H1 (cell line): ENCODE measurements at regions of chr5 and their contacts with region 1.

Region 1: DNA sequence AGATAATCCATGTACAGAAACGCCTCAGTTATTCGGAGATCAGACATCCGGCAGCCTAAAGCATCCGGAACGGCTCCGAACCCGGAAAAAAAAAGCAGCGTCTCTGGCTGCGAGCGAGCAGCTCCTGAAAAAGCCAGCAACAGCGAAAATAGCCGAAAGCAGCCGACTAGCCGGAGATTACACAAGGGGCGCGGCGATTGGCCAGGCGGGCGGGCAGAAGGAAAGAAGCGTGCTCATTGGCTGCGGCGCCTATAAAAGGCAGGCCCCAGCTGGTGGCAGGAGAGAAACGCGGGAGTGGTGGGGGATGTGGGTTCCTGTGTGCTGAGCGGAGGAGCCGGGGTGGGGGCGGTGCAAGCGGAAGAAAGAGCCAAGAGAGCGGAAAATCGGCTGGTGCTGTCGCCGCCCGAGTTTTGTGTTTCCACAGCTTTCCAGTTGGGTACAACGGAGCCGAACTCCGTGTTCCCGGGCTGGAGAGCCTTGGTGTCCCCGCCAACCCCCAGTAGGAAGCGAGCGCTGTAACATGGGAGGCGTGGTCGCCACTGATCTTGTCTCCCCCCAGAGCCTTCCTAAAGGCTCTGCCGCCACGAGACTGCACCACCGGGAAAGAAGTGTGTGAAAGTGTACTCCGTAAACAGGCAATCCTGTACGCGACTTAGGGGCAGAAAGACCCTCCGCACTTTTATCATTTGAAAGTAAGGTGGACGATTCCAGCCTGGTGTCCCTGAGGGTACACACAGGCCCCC is at the start of gene ARL15:
- DNase-seq: peak; percentile 89 to 99
- H3K4me3 ChIP-seq: peak within 1 kb of the TSS; percentile 81 to 86 (median 84)
- H3K27ac ChIP-seq: peak within 1 kb of the TSS; percentile 60
- H3K4me1 ChIP-seq: peaks cover 0 to 6% (median 3%) of the 10 kb centered on the region in 4 experiments; a peak in 4 of 7 replicates
- H3K27me3 ChIP-seq: peaks cover 0 to 2% (median 0%) of the 10 kb centered on the region in 4 experiments; a peak in 1 of 7 replicates
- CTCF ChIP-seq: no peak
- EP300 ChIP-seq: no peak
- POLR2A ChIP-seq: peak; percentile 100
- RAD21 ChIP-seq: no peak
- total RNA-seq, gene ARL15: 21.2 and 22.5 TPM in 2 replicates

Region 2: DNA sequence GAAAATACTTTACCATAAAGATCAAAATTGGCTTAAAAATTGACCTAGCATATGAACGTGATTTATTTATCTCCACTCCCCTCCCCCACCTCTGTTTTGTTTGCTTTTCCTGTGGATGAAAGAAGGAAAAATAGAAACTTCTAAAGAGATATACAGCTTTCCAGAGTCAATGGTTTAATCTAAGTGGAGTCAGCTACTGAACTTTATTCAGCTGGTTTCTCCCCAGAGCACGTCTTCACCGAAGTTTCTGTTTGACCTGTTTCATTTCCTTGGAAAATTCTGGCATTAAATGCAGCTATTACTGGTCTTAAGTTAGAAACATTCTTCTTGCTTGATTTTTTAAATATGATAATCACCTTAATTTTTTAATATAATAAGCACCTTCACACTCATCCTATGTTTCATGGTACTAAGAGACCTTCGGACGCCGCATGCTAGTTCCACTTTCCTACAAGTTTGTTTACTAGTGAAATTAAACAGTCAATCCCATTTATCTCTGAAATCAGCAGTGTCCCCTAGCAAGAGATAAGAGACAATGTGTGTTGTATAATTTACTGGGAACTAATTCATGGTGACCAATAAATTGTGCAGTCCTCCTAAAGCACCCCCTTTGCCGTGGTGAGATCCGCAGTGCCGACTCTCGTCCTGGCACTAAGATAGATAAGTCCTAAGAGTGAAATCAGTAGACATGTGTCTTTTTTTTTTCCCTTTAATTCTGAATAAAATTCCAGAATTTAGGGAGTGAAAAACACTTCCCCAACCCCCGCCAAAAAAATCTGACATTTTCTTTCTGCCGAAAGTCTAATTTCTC is 90.2 kb before region 1 on chr5:
- CTCF ChIA-PET with region 1: no interaction called
- POLR2A ChIA-PET with region 1: no interaction called
- DNase-seq: no peak
- H3K4me3 ChIP-seq: no peak overlapping the region
- H3K27ac ChIP-seq: no peak overlapping the region
- H3K4me1 ChIP-seq: peaks cover 0 to 10% (median 3%) of the 10 kb centered on the region in 4 experiments; a peak in 2 of 7 replicates
- H3K27me3 ChIP-seq: no peaks in the 10 kb centered on the region
- CTCF ChIP-seq: no peak
- EP300 ChIP-seq: no peak
- POLR2A ChIP-seq: no peak
- RAD21 ChIP-seq: no peak

Region 3: DNA sequence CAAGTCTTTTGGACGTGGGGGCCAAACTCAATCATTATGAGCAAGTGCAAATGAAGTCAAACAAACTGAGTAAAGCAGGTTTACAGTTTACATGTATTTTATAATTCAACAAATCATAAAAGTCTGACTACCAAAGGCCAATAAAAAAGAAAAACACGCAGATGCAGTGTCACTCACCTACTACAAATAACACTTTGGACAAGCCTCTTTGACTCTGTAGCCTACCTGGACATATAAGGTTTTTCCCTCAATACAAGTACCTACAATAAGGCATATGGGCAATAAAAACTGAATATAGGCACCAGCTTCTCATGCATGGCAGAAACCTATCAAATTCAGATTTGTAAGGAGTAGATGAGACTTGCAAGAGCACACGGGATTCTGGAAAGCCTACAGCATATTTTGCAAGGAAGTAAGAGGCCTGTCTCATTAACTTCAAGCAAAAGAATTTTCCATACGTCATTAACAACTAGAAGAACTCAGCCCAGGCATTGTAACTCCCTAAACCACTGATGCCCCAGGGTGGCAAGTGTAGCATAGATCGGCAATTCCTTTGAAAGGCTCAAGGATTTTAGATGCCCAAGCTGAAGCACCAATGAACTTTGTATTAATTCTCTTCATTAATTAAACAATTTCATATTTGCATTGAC is 21.9 kb before region 1 on chr5:
- CTCF ChIA-PET with region 1: interaction called, 3 read pairs
- POLR2A ChIA-PET with region 1: interaction called, 14 read pairs
- DNase-seq: no peak
- H3K4me3 ChIP-seq: no peak overlapping the region
- H3K27ac ChIP-seq: no peak overlapping the region
- H3K4me1 ChIP-seq: peaks cover 0 to 8% (median 3%) of the 10 kb centered on the region in 4 experiments; a peak in 5 of 7 replicates
- H3K27me3 ChIP-seq: no peaks in the 10 kb centered on the region
- CTCF ChIP-seq: no peak
- EP300 ChIP-seq: no peak
- POLR2A ChIP-seq: no peak
- RAD21 ChIP-seq: no peak

Region 4: GRCh38 chr5:54295651-54296276 is 14.8 kb before region 1 on chr5:
- CTCF ChIA-PET with region 1: interaction called, 5 read pairs
- POLR2A ChIA-PET with region 1: interaction called, 27 read pairs
- DNase-seq: no peak
- H3K4me3 ChIP-seq: no peak overlapping the region
- H3K27ac ChIP-seq: no peak overlapping the region
- H3K4me1 ChIP-seq: peaks cover 0 to 9% (median 8%) of the 10 kb centered on the region in 4 experiments; a peak in 4 of 7 replicates
- H3K27me3 ChIP-seq: no peaks in the 10 kb centered on the region
- CTCF ChIP-seq: no peak
- EP300 ChIP-seq: no peak
- POLR2A ChIP-seq: no peak
- RAD21 ChIP-seq: no peak

Region 5: GRCh38 chr5:54325610-54326311 is 15.2 kb after region 1 on chr5:
- CTCF ChIA-PET with region 1: interaction called, 9 read pairs
- POLR2A ChIA-PET with region 1: interaction called, 26 read pairs
- DNase-seq: no peak
- H3K4me3 ChIP-seq: no peak overlapping the region
- H3K27ac ChIP-seq: no peak overlapping the region
- H3K4me1 ChIP-seq: peaks cover 0 to 3% (median 0%) of the 10 kb centered on the region in 4 experiments; a peak in 3 of 7 replicates
- H3K27me3 ChIP-seq: no peaks in the 10 kb centered on the region
- CTCF ChIP-seq: no peak
- EP300 ChIP-seq: no peak
- POLR2A ChIP-seq: no peak
- RAD21 ChIP-seq: no peak

Region 6: DNA sequence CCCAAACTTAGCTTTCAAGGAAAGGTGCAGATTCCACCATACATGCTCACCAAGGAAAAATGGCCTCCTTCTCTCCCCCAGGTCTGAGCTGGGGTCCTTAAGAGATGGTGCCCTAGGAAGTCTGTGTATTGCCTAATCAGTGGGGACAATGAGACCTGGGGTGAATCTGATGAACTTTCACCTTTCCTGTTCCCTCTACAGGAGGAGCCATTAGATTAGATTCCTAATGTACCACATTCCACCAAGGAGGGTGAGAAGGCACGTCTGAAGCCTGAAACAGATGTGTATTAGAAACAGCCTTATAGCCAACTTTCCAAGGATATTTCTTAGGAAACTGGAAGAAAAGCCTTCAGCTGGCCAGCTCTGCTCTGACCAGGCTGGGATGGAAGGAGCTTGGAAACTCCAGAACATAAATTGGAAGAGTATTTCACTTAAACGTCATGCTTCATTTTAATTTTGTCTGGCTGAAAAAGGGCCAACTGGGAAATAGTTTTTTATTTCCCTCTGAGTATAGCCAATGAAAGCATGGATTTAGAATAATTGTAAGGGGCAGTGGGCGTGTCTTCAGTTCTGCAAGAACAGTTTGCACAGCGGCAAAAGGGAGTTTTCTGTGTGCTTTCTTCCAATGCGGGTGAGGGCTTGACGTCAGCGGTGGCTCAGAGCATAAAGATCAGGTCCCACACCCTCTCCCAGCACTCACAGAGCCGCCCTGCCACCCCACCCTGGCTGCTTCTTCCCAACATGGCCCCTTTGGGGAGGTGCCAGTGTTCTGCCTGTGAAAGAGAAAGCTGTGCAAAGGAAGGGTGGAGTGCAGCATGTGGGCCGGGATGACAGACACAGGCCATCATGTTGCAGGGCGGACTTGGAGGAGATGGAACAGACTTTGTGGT is 463.9 kb after region 1 on chr5:
- CTCF ChIA-PET with region 1: no interaction called
- POLR2A ChIA-PET with region 1: no interaction called
- DNase-seq: no peak
- H3K4me3 ChIP-seq: no peak overlapping the region
- H3K27ac ChIP-seq: no peak overlapping the region
- H3K4me1 ChIP-seq: no peaks in the 10 kb centered on the region
- H3K27me3 ChIP-seq: no peaks in the 10 kb centered on the region
- CTCF ChIP-seq: no peak
- EP300 ChIP-seq: no peak
- POLR2A ChIP-seq: no peak
- RAD21 ChIP-seq: no peak